Naive thymus-derived CD4-positive, alpha-beta T cell (primary cell): ENCODE measurements at regions of chr1 and their contacts with region 1.

Region 1: DNA sequence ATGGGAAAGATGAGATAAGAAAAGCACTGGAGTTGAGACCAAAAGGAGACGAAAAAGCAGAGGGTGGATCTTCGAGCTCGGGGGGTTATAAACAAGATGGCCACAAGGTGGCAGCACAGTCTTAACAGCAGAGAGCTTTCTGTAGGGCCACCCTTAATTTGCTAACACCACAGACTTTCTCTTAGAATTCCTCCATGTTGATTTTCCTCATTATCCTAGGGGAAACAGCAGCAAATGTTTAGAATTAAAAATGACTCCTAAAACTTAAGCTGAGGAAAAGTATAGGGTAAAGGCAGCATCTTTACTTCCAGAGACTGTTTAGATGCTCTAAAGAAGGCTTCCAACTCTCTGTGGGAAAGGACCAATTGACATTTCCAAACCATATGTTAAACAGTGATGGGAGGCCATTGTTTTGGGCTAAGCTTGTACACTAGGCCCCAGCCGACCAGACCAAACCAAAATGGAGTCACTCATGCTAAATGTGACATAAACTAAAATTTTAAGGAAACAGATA is 2.5 kb upstream of the APOBEC4 start:
- DNase-seq: peak; percentile 43 to 74 (median 65)
- ATAC-seq: peak; percentile 88
- H3K4me3 ChIP-seq: no peak overlapping the region
- H3K4me3 Mint-ChIP-seq: no peak overlapping the region
- H3K27ac ChIP-seq: no peak overlapping the region
- H3K27ac Mint-ChIP-seq: peak overlapping the region in 3 of 9 donors; percentile 4 to 60 (median 19)
- H3K4me1 ChIP-seq: peaks cover 18 to 34% of the 10 kb centered on the region in 2 donors
- H3K4me1 Mint-ChIP-seq: peaks cover 22 to 48% (median 36%) of the 10 kb centered on the region in 7 donors
- H3K27me3 ChIP-seq: no peaks in the 10 kb centered on the region
- H3K27me3 Mint-ChIP-seq: peaks cover 0 to 5% (median 0%) of the 10 kb centered on the region in 5 donors

Region 2: GRCh38 chr1:183670178-183670577 is 14.6 kb after region 1 on chr1:
- CTCF ChIA-PET with region 1: interaction called, 10 read pairs
- POLR2A ChIA-PET with region 1: no interaction called
- intact Hi-C with region 1: no loop called
- DNase-seq: no peak
- ATAC-seq: no peak
- H3K4me3 ChIP-seq: no peak overlapping the region
- H3K4me3 Mint-ChIP-seq: no peak overlapping the region
- H3K27ac ChIP-seq: no peak overlapping the region
- H3K27ac Mint-ChIP-seq: no peak overlapping the region
- H3K4me1 ChIP-seq: no peaks in the 10 kb centered on the region
- H3K4me1 Mint-ChIP-seq: peaks cover 0 to 3% (median 0%) of the 10 kb centered on the region in 7 donors
- H3K27me3 ChIP-seq: no peaks in the 10 kb centered on the region
- H3K27me3 Mint-ChIP-seq: peaks cover 0 to 21% (median 5%) of the 10 kb centered on the region in 5 donors

Region 3: GRCh38 chr1:183783767-183784637 is 128.4 kb after region 1 on chr1:
- CTCF ChIA-PET with region 1: no interaction called
- POLR2A ChIA-PET with region 1: no interaction called
- intact Hi-C with region 1: no loop called
- DNase-seq: no peak
- ATAC-seq: no peak
- H3K4me3 ChIP-seq: no peak overlapping the region
- H3K4me3 Mint-ChIP-seq: no peak overlapping the region
- H3K27ac ChIP-seq: no peak overlapping the region
- H3K27ac Mint-ChIP-seq: no peak overlapping the region
- H3K4me1 ChIP-seq: no peaks in the 10 kb centered on the region
- H3K4me1 Mint-ChIP-seq: peaks cover 0 to 3% (median 0%) of the 10 kb centered on the region in 7 donors
- H3K27me3 ChIP-seq: no peaks in the 10 kb centered on the region
- H3K27me3 Mint-ChIP-seq: no peaks in the 10 kb centered on the region

Region 4: GRCh38 chr1:183804881-183805841 is 149.5 kb after region 1 on chr1 and contains the start of gene RGL1:
- CTCF ChIA-PET with region 1: no interaction called
- POLR2A ChIA-PET with region 1: no interaction called
- intact Hi-C with region 1: loop called in 1 of 2 experiments (anchors 5 kb)
- DNase-seq: peak in 7 of 9 donors; percentile 10 to 43 (median 14)
- ATAC-seq: peak; percentile 77
- H3K4me3 ChIP-seq: peak within 1 kb of the TSS; percentile 55
- H3K4me3 Mint-ChIP-seq: peak within 1 kb of the TSS; percentile 84 to 98 (median 89)
- H3K27ac ChIP-seq: no peak within 1 kb of the TSS
- H3K27ac Mint-ChIP-seq: peak within 1 kb of the TSS in 4 of 9 donors; percentile 19 to 55 (median 36)
- H3K4me1 ChIP-seq: peaks cover 0 to 5% of the 10 kb centered on the region in 2 donors
- H3K4me1 Mint-ChIP-seq: peaks cover 10 to 20% (median 17%) of the 10 kb centered on the region in 7 donors
- H3K27me3 ChIP-seq: no peaks in the 10 kb centered on the region
- H3K27me3 Mint-ChIP-seq: peaks cover 5 to 25% (median 15%) of the 10 kb centered on the region in 5 donors
- total RNA-seq, gene RGL1: 0.98 to 6.2 (median 4.0) TPM

Region 5: GRCh38 chr1:184051485-184052193 is 396.0 kb after region 1 on chr1 and contains the start of gene TSEN15:
- CTCF ChIA-PET with region 1: no interaction called
- POLR2A ChIA-PET with region 1: no interaction called
- intact Hi-C with region 1: loop called in 1 of 2 experiments (anchors 5 kb)
- DNase-seq: peak; percentile 54 to 75 (median 68)
- ATAC-seq: peak; percentile 98
- H3K4me3 ChIP-seq: peak within 1 kb of the TSS; percentile 87
- H3K4me3 Mint-ChIP-seq: peak within 1 kb of the TSS; percentile 91 to 99 (median 98)
- H3K27ac ChIP-seq: peak within 1 kb of the TSS; percentile 77
- H3K27ac Mint-ChIP-seq: peak within 1 kb of the TSS; percentile 89 to 99 (median 95)
- H3K4me1 ChIP-seq: peaks cover 19 to 23% of the 10 kb centered on the region in 2 donors
- H3K4me1 Mint-ChIP-seq: peaks cover 18 to 56% (median 45%) of the 10 kb centered on the region in 7 donors
- H3K27me3 ChIP-seq: peaks cover 0 to 3% of the 10 kb centered on the region in 2 donors
- H3K27me3 Mint-ChIP-seq: peaks cover 13 to 33% (median 20%) of the 10 kb centered on the region in 5 donors
- total RNA-seq, gene TSEN15: 12.7 to 48.9 (median 31.1) TPM

Region 6: DNA sequence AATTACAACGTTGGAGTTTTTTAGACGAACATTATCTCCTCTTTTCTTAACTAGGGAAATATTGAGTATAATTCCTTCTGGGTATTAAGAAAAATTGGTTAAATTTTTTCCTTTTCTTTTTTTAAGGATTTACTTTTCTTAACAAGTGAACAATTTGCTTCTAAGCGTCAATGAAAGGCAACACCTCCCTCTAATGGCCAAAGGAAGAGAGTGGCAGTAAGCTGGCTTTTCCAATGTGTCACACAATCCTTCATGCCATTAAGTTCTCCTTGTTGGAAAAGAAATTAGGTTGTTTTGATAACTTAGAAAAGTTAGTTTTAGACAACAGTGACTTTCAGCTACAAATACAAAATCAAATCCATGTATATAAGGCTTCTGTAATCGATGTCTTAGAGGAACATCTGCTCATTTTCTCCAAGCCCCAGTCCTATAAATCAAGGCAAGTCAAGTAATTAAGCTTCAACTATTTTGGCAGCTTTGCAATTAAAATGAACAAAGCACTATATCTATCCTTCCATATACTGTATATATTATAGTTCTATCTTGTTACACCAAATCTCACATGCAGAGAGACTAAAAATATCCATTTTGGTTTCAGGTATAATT is 1036.2 kb after region 1 on chr1:
- CTCF ChIA-PET with region 1: no interaction called
- POLR2A ChIA-PET with region 1: no interaction called
- intact Hi-C with region 1: loop called in 1 of 2 experiments (anchors 10 kb)
- DNase-seq: no peak
- ATAC-seq: no peak
- H3K4me3 ChIP-seq: no peak overlapping the region
- H3K4me3 Mint-ChIP-seq: no peak overlapping the region
- H3K27ac ChIP-seq: no peak overlapping the region
- H3K27ac Mint-ChIP-seq: peak overlapping the region in 3 of 9 donors; percentile 2 to 30 (median 27)
- H3K4me1 ChIP-seq: no peaks in the 10 kb centered on the region
- H3K4me1 Mint-ChIP-seq: peaks cover 0 to 6% (median 2%) of the 10 kb centered on the region in 7 donors
- H3K27me3 ChIP-seq: no peaks in the 10 kb centered on the region
- H3K27me3 Mint-ChIP-seq: no peaks in the 10 kb centered on the region